Gastrocnemius medialis (tissue), 4 donors: ENCODE measurements at regions of chr15 and their contacts with region 1.

Region 1: DNA sequence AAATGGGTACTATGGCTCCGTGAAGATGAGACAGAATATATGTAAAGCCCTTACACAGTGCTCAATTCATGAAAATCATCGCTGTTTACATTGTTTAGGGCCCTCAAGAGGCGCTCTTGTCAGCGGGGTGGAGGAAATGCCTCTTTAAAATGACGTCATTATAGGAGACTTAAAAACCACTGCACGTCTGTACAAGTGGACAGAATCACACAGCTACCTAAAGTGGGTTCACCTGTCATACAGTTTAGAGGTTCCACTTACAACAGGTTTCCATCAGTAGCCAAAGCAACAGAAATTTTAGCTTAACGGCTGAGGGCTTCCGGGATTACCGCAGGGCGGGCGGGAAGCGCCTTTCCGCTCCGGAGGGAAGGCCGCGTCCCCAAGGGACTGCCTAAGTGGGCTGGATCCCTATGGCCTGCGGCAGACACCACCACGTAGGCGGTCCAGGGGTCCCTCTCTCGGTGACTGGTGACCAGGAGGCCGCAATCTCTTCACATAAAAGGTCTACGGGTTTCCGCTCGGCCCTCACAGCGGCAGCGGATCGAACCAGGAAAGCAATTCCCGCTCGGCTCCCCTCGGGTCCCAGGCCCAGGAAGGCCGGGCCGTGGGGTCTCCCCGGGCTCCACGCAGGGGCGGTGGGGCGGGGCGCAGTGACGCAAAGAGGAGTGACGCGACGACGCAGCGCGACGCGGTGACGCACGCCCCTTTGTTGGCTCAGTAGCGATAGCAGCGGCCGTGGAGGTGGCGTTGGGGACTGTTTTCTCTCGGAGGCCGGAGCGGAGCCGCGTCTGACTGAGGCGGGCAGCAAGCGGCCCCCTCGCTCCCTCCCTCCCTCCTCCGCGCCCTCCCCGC is at the start of gene ARIH1:
- DNase-seq: peak; percentile 92 to 96
- ATAC-seq: peak; percentile 88 to 90
- H3K4me3 ChIP-seq: peak within 1 kb of the TSS; percentile 86 to 88 (median 86)
- H3K27ac ChIP-seq: peak within 1 kb of the TSS; percentile 98 to 100 (median 99)
- H3K4me1 ChIP-seq: peaks cover 32 to 41% of the 10 kb centered on the region in 2 donors
- H3K27me3 ChIP-seq: no peaks in the 10 kb centered on the region
- CTCF ChIP-seq: peak in 3 of 5 experiments; percentile 23 to 40 (median 34)
- POLR2A ChIP-seq: peak; percentile 98 to 99
- total RNA-seq, gene ARIH1: 46.3 to 85.6 (median 68.3) TPM

Region 2: DNA sequence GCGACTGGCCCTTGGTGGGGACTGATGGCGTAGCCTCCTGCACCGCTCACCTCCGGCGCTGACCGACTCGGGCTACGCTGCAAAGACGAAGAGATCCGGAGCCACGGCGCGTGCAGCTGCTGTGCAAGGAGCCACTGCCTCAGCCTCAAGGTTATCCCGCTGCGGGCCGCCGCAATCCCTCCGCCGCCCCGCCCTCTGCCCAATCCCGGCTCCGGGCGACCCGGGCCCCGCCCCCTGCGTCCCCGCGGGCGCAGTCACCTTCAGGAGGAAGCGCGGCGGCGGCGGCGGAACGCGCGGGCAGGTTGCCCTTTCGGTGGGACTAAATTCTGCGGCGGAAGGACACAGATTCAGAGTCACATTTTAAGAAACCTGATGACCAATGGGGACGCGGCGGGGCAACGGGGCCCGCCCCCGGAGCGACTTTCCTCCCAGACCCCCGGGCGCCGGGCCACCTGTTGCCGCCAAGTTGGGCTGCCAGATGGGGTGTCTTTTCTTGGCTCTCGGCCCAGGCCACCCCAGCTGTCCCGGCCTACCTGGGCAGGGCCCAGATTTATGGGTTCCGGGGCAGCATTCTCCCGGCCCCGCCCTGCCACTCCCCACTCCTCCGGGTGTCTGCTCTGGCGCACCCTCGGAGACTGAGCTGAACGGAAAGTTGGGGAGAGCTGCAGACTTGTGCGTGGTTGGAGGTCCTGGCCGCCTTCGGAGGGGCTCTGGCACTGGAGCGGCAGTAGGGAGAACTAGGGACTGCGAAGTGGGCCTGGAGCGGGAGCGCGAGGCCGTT is 242.6 kb before region 1 on chr15 and contains the start of gene PKM:
- in situ Hi-C with region 1: no loop called
- intact Hi-C with region 1: loop called (anchors 1 kb)
- DNase-seq: peak; percentile 91 to 97
- ATAC-seq: peak; percentile 55 to 70
- H3K4me3 ChIP-seq: peak within 1 kb of the TSS; percentile 68 to 96 (median 80)
- H3K27ac ChIP-seq: peak within 1 kb of the TSS; percentile 96 to 99 (median 98)
- H3K4me1 ChIP-seq: peaks cover 35 to 46% of the 10 kb centered on the region in 2 donors
- H3K27me3 ChIP-seq: no peaks in the 10 kb centered on the region
- CTCF ChIP-seq: peak in 1 of 5 experiments; percentile 46
- POLR2A ChIP-seq: peak; percentile 98
- total RNA-seq, gene PKM: 691 to 946 (median 810) TPM

Region 3: DNA sequence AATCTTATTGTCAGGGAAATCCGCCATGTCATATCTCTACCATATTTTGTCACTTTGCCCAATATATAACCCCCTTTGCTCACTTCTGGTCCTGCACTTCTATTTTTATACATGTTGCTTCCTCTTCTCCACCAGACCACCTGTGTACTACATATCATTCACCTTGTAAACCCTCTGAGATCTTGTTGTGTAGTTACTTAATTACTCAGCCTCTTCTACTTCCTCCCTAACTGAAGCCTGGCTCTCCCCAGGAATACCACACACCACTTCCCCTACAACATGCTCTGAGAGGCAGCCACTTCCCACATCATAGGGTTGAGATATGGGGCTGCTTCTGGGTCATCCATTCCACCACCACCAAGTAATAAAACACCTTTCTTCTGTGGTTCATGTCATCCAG is 108.0 kb before region 1 on chr15:
- in situ Hi-C with region 1: loop called in 2 of 4 experiments (anchors 10 kb)
- intact Hi-C with region 1: no loop called
- DNase-seq: no peak
- ATAC-seq: no peak
- H3K4me3 ChIP-seq: no peak overlapping the region
- H3K27ac ChIP-seq: no peak overlapping the region
- H3K4me1 ChIP-seq: peaks cover 12 to 17% of the 10 kb centered on the region in 2 donors
- H3K27me3 ChIP-seq: no peaks in the 10 kb centered on the region
- CTCF ChIP-seq: no peak
- POLR2A ChIP-seq: no peak

Region 4: DNA sequence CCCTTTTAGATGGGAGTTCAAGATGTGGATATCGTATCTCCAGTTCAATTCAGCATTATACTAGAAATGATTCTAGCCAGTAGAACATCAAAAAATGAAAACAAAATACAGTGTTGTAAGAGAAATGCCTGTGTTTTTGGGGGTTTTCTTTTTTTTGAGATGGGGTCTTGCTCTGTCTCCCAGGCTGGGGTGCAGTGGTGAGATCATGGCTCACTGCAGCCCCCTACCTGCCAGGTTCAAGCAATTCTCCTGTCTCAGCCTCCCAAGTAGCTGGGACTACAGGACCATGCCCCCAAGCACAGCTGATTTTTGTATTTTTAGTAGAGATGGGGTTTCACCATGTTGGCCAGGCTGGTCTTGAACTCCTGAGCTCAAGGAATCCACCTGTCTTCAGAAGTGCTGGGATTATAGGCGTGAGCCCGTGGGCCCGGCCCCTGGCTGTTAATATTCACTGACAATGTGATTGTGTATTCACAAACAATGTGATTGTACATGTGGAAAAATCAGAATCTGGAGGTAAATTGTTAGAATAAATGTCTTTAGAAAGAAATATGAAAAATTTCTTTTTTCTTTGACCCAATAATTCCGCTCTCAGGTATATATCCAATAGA is 59.3 kb after region 1 on chr15:
- in situ Hi-C with region 1: no loop called
- intact Hi-C with region 1: loop called (anchors 1 kb)
- DNase-seq: no peak
- ATAC-seq: no peak
- H3K4me3 ChIP-seq: no peak overlapping the region
- H3K27ac ChIP-seq: no peak overlapping the region
- H3K4me1 ChIP-seq: peaks cover 0 to 7% of the 10 kb centered on the region in 2 donors
- H3K27me3 ChIP-seq: no peaks in the 10 kb centered on the region
- CTCF ChIP-seq: peak in 4 of 5 experiments; percentile 33 to 47 (median 38)
- POLR2A ChIP-seq: no peak

Region 5: DNA sequence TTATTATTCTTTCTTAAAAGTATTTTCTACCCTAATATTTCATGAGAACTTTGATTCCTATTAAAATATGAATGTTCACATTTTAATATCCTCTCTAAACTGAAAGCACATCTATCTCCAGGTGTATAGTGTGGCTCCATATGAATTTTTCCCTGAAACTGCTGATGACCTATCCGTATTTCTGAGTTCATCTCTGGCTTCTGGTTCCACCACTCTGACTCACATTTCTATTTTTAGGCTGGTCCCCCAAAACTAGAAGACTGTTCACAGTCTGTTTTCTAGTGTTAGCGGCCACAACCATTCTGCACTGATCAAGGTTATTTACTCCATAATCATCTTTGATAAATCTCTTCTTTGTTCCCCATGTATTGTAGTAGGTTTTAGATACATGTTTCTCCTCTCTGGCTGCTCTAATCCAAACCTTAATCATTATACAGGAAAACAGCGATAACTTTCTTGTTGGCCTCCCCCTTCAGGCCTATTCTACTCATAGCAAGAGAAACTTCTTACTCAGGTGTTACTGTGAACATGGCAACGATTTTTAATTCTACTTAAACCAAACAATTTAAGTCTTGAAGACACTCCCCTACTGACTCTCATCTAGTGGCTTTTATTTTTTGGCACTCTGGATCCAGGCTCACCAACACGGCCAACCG is 297.0 kb after region 1 on chr15:
- in situ Hi-C with region 1: no loop called
- intact Hi-C with region 1: no loop called
- DNase-seq: no peak
- ATAC-seq: no peak
- H3K4me3 ChIP-seq: no peak overlapping the region
- H3K27ac ChIP-seq: no peak overlapping the region
- H3K4me1 ChIP-seq: no peaks in the 10 kb centered on the region
- H3K27me3 ChIP-seq: no peaks in the 10 kb centered on the region
- CTCF ChIP-seq: no peak
- POLR2A ChIP-seq: no peak

Region 6: DNA sequence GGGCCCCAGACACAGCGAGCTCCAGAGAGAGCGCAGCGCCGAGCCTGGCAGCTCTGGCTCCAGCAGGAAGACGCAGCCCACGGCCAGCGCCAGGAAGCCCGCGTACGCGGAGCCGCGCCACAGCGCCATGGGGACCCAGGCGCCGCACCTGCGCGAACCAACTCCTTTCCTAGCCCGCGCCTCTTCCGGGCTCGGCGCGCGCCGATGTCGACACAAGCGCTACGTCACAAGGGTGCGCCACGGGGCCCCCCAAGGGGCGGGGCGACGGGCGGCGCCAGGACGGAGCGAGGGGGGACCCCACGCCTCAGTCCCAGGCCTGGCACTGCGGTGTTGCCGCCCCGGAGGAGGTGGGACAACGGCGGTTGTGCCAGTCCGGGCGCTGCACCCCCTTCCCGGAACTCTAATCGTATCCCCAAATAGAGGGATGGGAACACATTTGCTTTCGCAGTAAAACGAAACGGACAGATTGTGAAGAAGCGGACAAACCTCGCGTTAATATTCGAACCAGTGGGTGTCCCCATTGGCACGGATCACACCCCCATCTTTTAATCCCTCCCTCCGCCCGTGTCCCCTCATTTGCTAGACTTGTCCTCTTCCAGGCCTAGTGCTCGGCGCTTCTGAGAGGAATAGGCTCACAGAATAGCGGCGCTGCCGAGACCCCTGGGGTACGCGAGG is 309.9 kb after region 1 on chr15 and contains the start of gene ADPGK:
- in situ Hi-C with region 1: no loop called
- intact Hi-C with region 1: loop called (anchors 5 kb)
- DNase-seq: peak; percentile 68 to 86
- ATAC-seq: peak; percentile 87
- H3K4me3 ChIP-seq: peak within 1 kb of the TSS; percentile 86 to 99 (median 94)
- H3K27ac ChIP-seq: peak within 1 kb of the TSS; percentile 94 to 96 (median 96)
- H3K4me1 ChIP-seq: peaks cover 20 to 35% of the 10 kb centered on the region in 2 donors
- H3K27me3 ChIP-seq: no peaks in the 10 kb centered on the region
- CTCF ChIP-seq: peak in 2 of 5 experiments; percentile 52 to 61
- POLR2A ChIP-seq: peak; percentile 84 to 94
- total RNA-seq, gene ADPGK: 13.4 to 23.2 (median 17.2) TPM